ENCODE measurements at regions of chr4 and their contacts with region 1.

Region 1: GRCh38 chr4:39706334-39706733 is 8.4 kb downstream of the UBE2K start:
- DNase-seq: no peak
- ATAC-seq: no peak
- H3K4me3 ChIP-seq: no peak overlapping the region
- H3K4me3 Mint-ChIP-seq: no peak overlapping the region
- H3K27ac ChIP-seq: no peak overlapping the region
- H3K27ac Mint-ChIP-seq: peak overlapping the region; percentile 65
- H3K4me1 ChIP-seq: peaks cover 18% of the 10 kb centered on the region
- H3K4me1 Mint-ChIP-seq: peaks cover 55% of the 10 kb centered on the region
- H3K27me3 ChIP-seq: no peaks in the 10 kb centered on the region
- H3K27me3 Mint-ChIP-seq: no peaks in the 10 kb centered on the region
- CTCF ChIP-seq: no peak

Region 2: DNA sequence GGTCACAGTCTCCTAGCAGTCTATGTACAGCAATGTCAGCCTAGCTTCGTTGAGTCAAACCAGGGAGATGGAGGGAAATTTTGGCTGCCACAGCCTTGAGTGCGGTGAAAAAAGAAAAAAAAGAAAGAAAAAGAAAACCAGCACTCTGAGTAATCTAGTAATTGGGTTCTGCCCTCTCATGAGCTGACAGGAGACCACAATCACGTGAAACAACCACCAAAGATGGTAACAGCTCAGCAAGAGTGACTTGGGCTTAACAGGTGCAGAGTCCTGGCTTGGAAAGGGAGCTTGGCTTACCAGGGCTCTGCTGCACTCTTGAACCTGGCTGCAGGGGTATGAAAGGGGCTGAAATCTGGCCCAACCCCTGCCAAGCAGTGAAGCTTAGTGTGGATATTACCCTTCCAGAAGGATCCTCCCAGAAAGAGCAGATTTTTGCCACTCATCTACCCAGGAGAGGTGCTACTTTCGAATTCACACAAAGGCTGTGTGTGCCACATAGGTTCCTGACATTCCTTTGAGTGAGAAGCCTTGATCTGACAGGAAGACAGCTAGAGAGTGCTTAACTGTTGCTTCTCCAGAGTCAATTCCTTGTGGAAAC is 1395.8 kb before region 1 on chr4:
- CTCF ChIA-PET with region 1: no interaction called
- POLR2A ChIA-PET with region 1: no interaction called
- intact Hi-C with region 1: loop called in 1 of 2 experiments (anchors 10 kb)
- DNase-seq: peak; percentile 19 to 94 (median 65)
- ATAC-seq: peak; percentile 96
- H3K4me3 ChIP-seq: peak overlapping the region in 1 of 2 experiments; percentile 3
- H3K4me3 Mint-ChIP-seq: peak overlapping the region; percentile 54
- H3K27ac ChIP-seq: peak overlapping the region; percentile 6 to 47
- H3K27ac Mint-ChIP-seq: peak overlapping the region; percentile 90
- H3K4me1 ChIP-seq: peaks cover 38% of the 10 kb centered on the region
- H3K4me1 Mint-ChIP-seq: peaks cover 47% of the 10 kb centered on the region
- H3K27me3 ChIP-seq: no peaks in the 10 kb centered on the region
- H3K27me3 Mint-ChIP-seq: no peaks in the 10 kb centered on the region
- CTCF ChIP-seq: no peak